ENCODE measurements at regions of chr1 and their contacts with region 1.

Region 1: DNA sequence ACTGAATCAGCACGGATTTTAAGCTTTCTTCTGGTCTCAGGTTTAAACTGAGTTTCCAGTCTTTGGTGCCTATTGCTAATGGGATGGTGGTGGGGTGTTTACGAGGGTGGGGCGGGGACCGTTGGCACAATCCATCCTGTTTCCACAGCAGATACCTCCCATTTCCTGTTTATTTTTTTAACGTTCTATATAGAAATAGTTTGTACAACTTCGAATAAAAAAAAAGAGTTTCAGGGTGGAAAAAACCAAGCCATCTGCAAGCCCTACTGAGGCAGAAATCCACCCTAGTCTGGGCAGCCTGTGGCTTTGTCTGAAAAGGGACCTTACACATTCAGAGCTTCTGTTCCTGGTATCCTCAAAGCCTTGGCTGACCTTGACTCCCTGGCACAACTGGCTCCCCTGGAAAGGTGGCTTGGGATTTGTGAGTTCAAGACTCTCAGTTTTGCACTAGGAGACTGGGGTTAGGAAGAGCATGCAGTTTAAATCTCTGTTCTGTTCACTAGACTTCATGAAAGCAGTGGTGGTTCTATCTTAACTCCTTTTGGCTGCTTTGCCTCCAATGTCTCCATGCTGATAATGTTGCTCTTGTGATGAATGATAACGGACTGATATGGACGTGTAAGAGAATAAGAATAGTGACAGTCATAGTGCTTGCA is 46.7 kb downstream of the VANGL2 start:
- DNase-seq: no peak
- H3K4me3 ChIP-seq: no peak overlapping the region
- H3K27ac ChIP-seq: no peak overlapping the region
- H3K4me1 ChIP-seq: no peaks in the 10 kb centered on the region
- H3K27me3 ChIP-seq: no peaks in the 10 kb centered on the region
- CTCF ChIP-seq: no peak

Region 2: GRCh38 chr1:160098852-160099561 is 348.1 kb before region 1 on chr1:
- CTCF ChIA-PET with region 1: no interaction called
- POLR2A ChIA-PET with region 1: no interaction called
- intact Hi-C with region 1: no loop called
- DNase-seq: peak; percentile 95
- H3K4me3 ChIP-seq: peak overlapping the region; percentile 51
- H3K27ac ChIP-seq: peak overlapping the region; percentile 79
- H3K4me1 ChIP-seq: peaks cover 17% of the 10 kb centered on the region
- H3K27me3 ChIP-seq: no peaks in the 10 kb centered on the region
- CTCF ChIP-seq: no peak

Region 3: DNA sequence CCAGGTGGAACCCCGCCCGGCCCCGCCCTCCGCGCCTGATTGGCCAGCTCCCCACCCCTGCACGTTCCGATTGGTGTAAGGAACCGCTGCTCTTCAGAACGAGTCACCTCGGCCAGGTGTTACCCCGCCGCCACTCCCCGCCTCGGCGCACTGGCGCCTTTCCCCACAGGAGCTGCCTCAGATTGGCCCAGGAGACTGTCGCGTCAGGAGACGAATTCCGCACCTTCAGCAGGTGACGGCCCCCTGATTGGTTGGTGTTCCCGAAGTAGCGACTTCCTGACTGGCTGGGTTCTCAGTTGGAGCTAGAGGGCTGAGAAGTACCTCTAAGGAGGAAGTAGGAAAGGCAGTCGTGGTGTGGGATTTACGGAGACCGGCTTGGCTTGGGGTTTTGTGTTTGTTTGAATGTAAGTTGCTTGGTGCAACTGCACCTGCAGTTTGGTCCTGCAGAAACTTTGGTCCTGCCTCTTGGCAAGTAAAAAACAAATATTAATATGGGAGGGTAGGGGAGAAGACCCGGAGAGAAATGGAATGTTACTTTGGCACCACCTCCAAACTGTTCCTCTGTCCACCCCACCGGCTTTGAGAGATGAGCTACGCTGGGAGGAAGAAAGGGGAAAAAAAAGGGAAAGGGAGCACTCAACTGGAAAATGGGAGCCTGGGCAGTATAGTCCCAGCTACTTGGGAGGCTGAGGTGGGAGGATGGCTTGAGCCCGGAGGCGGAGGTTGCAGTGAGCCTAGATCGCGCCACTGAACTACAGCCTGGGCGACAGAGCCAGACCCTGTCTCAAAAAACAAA is 574.3 kb after region 1 on chr1:
- CTCF ChIA-PET with region 1: interaction called, 10 read pairs
- POLR2A ChIA-PET with region 1: no interaction called
- intact Hi-C with region 1: no loop called
- DNase-seq: peak; percentile 73
- H3K4me3 ChIP-seq: peak overlapping the region; percentile 60
- H3K27ac ChIP-seq: no peak overlapping the region
- H3K4me1 ChIP-seq: peaks cover 9% of the 10 kb centered on the region
- H3K27me3 ChIP-seq: peaks cover 9% of the 10 kb centered on the region
- CTCF ChIP-seq: no peak